Prostate gland (tissue), 2 donors: ENCODE measurements at regions of chr7 and their contacts with region 1.

Region 1: GRCh38 chr7:148962823-148963582 is 65.3 kb downstream of the PDIA4 start:
- DNase-seq: peak; percentile 55
- H3K4me3 ChIP-seq: peak overlapping the region; percentile 35 to 42
- H3K27ac ChIP-seq: peak overlapping the region; percentile 29 to 49
- H3K4me1 ChIP-seq: no peaks in the 10 kb centered on the region
- H3K27me3 ChIP-seq: no peaks in the 10 kb centered on the region
- CTCF ChIP-seq: peak in 3 of 4 experiments; percentile 60 to 69 (median 61)
- POLR2A ChIP-seq: no peak

Region 2: GRCh38 chr7:148503875-148504487 is 459.0 kb before region 1 on chr7:
- intact Hi-C with region 1: loop called (anchors 5 kb)
- DNase-seq: no peak
- H3K4me3 ChIP-seq: no peak overlapping the region
- H3K27ac ChIP-seq: no peak overlapping the region
- H3K4me1 ChIP-seq: no peaks in the 10 kb centered on the region
- H3K27me3 ChIP-seq: no peaks in the 10 kb centered on the region
- CTCF ChIP-seq: peak; percentile 26 to 73 (median 68)
- POLR2A ChIP-seq: no peak

Region 3: DNA sequence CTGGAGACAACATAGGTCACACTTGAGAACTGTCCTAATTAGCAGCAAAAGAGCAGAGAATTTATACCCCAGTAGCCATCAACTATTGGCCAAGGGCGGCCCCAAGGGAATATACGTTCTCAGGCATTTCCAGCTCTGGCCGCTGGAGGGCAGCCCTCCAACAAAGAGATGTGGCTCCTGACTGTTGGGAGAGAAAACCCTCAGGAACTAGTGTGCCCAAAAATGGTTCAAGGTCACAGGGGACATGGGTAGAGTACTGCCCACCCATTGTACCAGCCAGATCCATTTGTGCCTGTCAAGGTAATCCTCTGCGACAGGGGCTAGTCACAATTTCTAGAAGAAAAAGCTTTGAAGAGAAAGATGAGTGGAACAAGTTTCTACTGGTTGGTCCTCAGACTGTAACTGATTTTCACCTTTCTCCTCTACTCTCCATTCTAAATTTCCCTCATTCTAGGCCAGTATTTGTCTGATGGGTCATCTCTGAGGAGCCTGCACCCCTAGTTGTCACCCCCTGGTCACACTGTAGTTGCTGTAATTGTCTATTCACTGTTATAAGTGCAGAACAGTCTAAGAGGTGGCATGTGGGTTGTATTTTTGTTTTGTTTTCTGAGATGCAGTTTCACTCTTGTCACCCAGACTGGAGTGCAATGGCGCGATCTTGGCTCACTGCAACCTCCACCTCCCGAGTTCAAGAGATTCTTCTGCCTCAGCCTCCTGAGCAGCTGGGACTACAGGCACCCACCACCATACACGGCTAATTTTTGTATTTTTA is 387.2 kb before region 1 on chr7:
- intact Hi-C with region 1: loop called (anchors 5 kb)
- DNase-seq: peak; percentile 62
- H3K4me3 ChIP-seq: no peak overlapping the region
- H3K27ac ChIP-seq: no peak overlapping the region
- H3K4me1 ChIP-seq: no peaks in the 10 kb centered on the region
- H3K27me3 ChIP-seq: no peaks in the 10 kb centered on the region
- CTCF ChIP-seq: peak; percentile 50 to 74 (median 66)
- POLR2A ChIP-seq: no peak